ENCODE measurements at regions of chr1 and their contacts with region 1.

Region 1: GRCh38 chr1:184973272-184974055 is 844 bp downstream of the NIBAN1 start:
- DNase-seq: peak; percentile 77
- ATAC-seq: peak; percentile 60

Region 2: GRCh38 chr1:184827600-184828368 is 145.7 kb before region 1 on chr1:
- intact Hi-C with region 1: loop called (anchors 5 kb)
- DNase-seq: no peak
- ATAC-seq: peak; percentile 65

Region 3: GRCh38 chr1:184892116-184892515 is 81.3 kb before region 1 on chr1:
- intact Hi-C with region 1: loop called (anchors 5 kb)
- DNase-seq: no peak
- ATAC-seq: no peak

Region 4: DNA sequence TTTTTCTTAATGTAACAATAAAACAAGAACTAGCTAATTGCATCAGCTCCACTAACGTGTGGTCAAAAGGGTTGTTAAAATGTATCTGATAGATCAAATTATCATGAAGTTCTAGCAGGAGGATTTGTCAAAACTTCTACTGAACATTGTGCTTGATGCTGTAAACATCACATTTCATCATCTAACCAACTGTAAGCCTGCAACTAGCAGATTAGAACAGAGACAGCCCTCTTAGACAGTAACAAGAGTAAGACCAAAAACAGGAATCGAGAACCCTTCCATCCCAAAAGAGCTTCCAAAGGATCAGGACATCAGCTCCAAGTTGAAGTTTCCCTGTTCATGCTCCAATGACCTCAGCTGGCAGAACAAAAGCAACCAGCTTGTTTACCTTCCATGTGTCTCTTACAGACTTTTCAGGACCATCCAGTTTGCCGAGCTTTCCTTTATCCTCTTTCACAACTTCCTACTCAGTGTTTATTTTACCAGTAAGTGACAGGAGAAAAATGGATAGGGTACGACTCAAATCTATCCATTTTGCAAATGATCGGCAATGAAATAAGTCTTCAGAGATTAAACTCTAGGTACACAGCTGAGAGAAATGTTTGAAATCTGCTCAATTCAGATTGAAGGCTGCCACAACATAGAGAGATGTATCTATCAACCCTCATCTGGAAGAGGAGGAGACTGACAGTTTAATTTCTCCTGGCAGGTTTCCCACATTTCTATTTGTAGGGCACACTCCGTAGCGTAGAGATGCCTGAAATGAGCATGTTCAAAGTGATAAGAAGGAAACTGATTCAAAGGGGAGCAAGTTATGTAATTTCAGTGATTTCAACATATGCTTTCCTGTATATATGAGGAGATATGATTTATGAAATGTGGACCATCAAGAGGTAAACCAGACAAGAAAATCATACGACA is 43.5 kb before region 1 on chr1:
- intact Hi-C with region 1: no loop called
- DNase-seq: no peak
- ATAC-seq: peak; percentile 45

Region 5: GRCh38 chr1:184958554-184959353 is 14.7 kb before region 1 on chr1:
- intact Hi-C with region 1: loop called (anchors 2 kb)
- DNase-seq: peak; percentile 79
- ATAC-seq: peak; percentile 93

Region 6: DNA sequence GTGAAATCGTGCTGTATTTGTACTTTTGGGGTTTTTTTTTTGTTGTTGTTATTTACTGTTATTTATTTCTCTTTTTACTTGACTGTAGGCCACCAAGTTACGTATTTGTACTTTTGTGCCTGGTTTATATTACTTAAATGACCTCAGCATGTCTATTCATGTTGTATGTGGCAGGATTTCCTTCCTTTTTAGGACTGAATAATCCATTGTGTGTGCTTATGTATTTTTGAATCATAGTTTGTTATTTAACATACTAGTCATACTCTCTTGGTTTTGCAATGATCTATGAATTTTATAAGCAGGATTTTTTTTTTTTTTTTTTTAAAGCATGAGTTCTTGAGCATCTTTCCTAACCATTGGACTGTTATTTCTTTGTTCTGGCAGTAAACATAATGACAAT is 123.1 kb after region 1 on chr1:
- intact Hi-C with region 1: no loop called
- DNase-seq: no peak
- ATAC-seq: no peak

Measured in Right ventricle myocardium inferior (tissue), 1 donor.